ENCODE measurements at regions of chr9 and their contacts with region 1.

Region 1: DNA sequence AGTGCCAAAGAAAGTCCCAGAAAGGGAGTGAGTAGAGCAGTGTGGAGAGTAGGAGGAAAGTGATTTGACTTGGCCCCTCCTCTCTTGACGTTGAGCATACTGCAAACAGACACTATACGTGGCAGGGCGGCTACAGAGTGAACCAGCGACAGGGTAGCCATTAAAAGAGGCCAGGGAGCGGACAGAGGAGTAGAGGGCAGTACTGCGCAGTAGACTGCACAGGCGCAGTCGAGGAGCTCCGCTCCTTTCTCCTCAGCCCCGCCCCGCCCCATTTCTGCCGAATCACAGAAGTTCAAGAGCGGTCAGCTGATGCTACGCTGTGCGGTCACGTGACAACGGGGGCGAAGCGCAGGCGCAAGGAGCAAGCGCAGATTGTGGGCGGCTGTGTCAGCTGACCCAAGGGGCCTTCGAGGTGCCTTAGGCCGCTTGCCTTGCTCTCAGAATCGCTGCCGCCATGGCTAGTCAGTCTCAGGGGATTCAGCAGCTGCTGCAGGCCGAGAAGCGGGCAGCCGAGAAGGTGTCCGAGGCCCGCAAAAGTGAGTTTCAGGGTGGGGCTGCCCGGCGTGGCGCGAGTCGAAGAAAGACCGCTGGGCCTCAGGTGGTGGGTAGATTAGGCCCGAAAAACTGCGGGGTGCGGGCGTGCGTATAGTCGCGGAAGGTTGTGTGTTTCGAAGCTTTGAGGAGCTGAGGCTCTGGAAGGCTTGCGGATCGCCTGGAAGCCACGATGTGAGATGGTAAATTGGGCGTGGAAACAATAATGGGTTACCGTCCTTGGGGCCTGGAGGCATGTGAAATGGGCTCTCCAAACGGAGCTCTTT is at the start of gene ATP6V1G1:
- DNase-seq: peak; percentile 100
- ATAC-seq: peak; percentile 96
- H3K4me3 Mint-ChIP-seq: peak within 1 kb of the TSS; percentile 100
- H3K27ac Mint-ChIP-seq: peak within 1 kb of the TSS; percentile 98
- H3K4me1 Mint-ChIP-seq: peaks cover 45% of the 10 kb centered on the region
- H3K27me3 Mint-ChIP-seq: peaks cover 4% of the 10 kb centered on the region
- total RNA-seq, gene ATP6V1G1: 79.2 to 82.0 TPM

Region 2: GRCh38 chr9:114385412-114386181 is 202.0 kb before region 1 on chr9:
- CTCF ChIA-PET with region 1: no interaction called
- POLR2A ChIA-PET with region 1: interaction called, 10 read pairs
- DNase-seq: peak; percentile 95
- ATAC-seq: peak; percentile 81
- H3K4me3 Mint-ChIP-seq: peak overlapping the region; percentile 99
- H3K27ac Mint-ChIP-seq: peak overlapping the region; percentile 95
- H3K4me1 Mint-ChIP-seq: peaks cover 50% of the 10 kb centered on the region
- H3K27me3 Mint-ChIP-seq: no peaks in the 10 kb centered on the region

Region 3: GRCh38 chr9:114487607-114488300 is 99.8 kb before region 1 on chr9:
- CTCF ChIA-PET with region 1: interaction called, 11 read pairs
- POLR2A ChIA-PET with region 1: interaction called, 5 read pairs
- DNase-seq: peak; percentile 76
- ATAC-seq: peak; percentile 73
- H3K4me3 Mint-ChIP-seq: no peak overlapping the region
- H3K27ac Mint-ChIP-seq: no peak overlapping the region
- H3K4me1 Mint-ChIP-seq: peaks cover 26% of the 10 kb centered on the region
- H3K27me3 Mint-ChIP-seq: no peaks in the 10 kb centered on the region

Region 4: DNA sequence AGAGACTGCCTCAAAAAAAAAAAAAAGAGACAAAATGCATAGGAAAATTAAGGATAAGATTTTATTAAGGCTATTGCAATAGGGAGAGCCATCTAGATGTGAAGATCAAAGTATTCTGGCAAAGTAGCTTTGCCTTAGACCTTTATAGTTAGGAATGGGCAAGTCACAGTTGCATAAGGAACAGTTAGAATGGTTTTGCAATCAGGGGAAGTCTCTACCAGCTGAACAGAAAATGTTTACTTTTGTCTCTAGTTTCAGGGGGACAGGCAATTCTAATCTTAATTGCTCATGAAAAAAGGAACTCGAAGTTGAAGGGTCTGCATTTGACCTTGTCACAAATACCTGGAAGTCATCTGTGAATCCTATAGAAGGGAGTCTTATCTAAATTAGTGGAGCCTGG is 13.2 kb before region 1 on chr9:
- CTCF ChIA-PET with region 1: interaction called, 6 read pairs
- POLR2A ChIA-PET with region 1: interaction called, 15 read pairs
- DNase-seq: no peak
- ATAC-seq: no peak
- H3K4me3 Mint-ChIP-seq: no peak overlapping the region
- H3K27ac Mint-ChIP-seq: no peak overlapping the region
- H3K4me1 Mint-ChIP-seq: no peaks in the 10 kb centered on the region
- H3K27me3 Mint-ChIP-seq: no peaks in the 10 kb centered on the region

Region 5: GRCh38 chr9:114616653-114617520 is 29.3 kb after region 1 on chr9:
- CTCF ChIA-PET with region 1: interaction called, 59 read pairs
- POLR2A ChIA-PET with region 1: interaction called, 34 read pairs
- DNase-seq: no peak
- ATAC-seq: peak; percentile 21
- H3K4me3 Mint-ChIP-seq: peak overlapping the region; percentile 28
- H3K27ac Mint-ChIP-seq: peak overlapping the region; percentile 88
- H3K4me1 Mint-ChIP-seq: peaks cover 49% of the 10 kb centered on the region
- H3K27me3 Mint-ChIP-seq: no peaks in the 10 kb centered on the region